ENCODE measurements at regions of chr3 and their contacts with region 1.

Region 1: GRCh38 chr3:9067352-9067975 is 104.2 kb upstream of the RAD18 start:
- DNase-seq: no peak
- H3K4me3 ChIP-seq: no peak overlapping the region
- H3K27ac ChIP-seq: no peak overlapping the region
- H3K4me1 ChIP-seq: peaks cover 0 to 6% (median 0%) of the 10 kb centered on the region in 3 donors
- H3K27me3 ChIP-seq: no peaks in the 10 kb centered on the region
- CTCF ChIP-seq: peak in 5 of 6 experiments; percentile 80 to 91 (median 84)
- POLR2A ChIP-seq: no peak

Region 2: GRCh38 chr3:8987645-8988383 is 79.7 kb before region 1 on chr3:
- intact Hi-C with region 1: loop called (anchors 5 kb)
- DNase-seq: no peak
- H3K4me3 ChIP-seq: no peak overlapping the region
- H3K27ac ChIP-seq: no peak overlapping the region
- H3K4me1 ChIP-seq: peaks cover 0 to 3% (median 0%) of the 10 kb centered on the region in 3 donors
- H3K27me3 ChIP-seq: no peaks in the 10 kb centered on the region
- CTCF ChIP-seq: peak in 5 of 6 experiments; percentile 69 to 78 (median 70)
- POLR2A ChIP-seq: no peak

Measured in esophagus squamous epithelium (tissue), 5 donors.